ENCODE measurements at regions of chr9 and their contacts with region 1.

Region 1: DNA sequence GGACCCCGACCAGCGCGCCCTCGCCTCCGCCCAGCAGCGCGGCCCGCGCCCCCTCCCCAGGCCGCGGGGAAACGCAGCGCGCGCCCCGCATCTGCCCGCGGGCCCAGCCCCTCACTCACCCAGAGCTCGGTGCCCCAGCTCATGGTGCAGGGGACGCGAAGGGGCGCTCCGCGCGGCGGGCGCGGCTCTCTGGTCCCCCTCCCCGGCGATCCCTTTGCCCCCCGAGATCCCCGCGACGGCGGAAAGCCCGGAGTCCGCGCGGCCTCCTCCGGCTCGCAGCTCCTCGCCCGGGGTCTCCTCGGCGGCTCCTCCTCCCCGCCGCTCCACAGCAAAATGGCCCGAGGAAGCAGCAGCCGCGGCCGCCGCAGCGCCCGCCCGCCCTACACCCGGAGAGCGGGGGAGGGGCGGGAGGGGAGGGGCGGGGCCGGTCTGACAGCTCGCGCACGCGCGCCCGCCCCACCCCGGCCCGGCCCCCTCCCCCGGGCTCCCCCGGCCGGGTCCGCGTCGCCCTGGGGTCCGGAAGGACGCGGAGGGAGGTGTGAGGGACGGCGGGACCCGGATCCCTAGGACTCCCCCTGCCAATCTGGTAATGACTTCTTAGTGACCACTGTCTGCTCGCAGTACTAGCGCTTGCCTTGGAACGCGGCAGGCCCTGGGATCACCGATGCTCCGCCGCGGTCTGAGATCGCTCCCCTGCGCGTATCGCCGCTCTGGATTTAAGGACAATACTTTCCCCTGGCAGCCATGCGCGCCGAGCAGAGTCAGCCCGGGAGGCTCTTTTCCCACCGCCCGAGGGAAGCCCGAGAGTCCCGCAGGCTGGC is at the start of gene FNBP1:
- DNase-seq: peak; percentile 56
- ATAC-seq: peak; percentile 82
- H3K4me3 ChIP-seq: peak within 1 kb of the TSS; percentile 68 to 97 (median 78)
- H3K27ac ChIP-seq: peak within 1 kb of the TSS; percentile 85
- H3K4me1 ChIP-seq: peaks cover 55% of the 10 kb centered on the region
- H3K27me3 ChIP-seq: no peaks in the 10 kb centered on the region
- CTCF ChIP-seq: no peak
- EP300 ChIP-seq: no peak
- POLR2A ChIP-seq: peak in 1 of 2 experiments; percentile 73; a peak in 2 of 4 replicates
- RAD21 ChIP-seq: no peak
- total RNA-seq, gene FNBP1: 19.5 and 22.9 TPM in 2 replicates

Region 2: DNA sequence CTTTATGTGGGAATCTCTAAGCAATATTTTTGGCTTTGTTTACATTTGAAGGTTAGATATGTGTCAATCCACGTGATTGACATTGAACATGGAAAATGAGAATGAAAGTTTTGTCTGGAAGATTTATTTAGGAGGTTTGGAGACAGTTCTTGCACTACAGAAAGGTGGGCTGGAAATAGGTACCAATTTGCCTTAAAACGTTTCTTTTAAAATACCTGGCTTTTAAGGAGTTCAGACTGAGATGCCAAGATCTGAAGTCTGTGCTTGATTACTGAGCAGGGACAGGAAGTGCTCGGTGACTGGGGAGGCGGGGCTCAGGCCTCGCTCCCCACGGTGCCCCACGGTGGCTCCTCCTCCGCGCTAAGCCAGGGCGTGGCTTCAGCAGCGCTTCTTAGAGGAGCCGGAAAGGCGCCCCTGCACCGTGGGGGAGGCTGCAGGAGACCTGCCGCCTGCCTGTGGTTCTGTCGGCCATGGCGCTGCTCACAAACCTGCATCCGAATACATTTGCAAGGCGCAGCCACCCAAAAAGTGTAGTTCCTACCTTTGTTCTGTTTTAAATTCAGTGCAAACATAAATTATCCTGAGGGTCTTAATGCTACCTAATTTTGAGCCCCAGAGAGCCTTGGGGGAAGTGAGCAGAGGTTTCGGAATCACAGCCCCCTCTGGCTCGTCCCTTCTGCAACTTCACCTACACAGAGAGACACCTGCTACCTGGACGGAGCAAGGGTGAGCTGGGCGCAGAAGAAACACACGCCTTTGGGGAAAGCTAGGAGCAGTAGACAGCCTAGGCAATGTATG is 158.6 kb before region 1 on chr9:
- CTCF ChIA-PET with region 1: interaction called, 9 read pairs
- POLR2A ChIA-PET with region 1: interaction called, 15 read pairs
- in situ Hi-C with region 1: loop called (anchors 5 kb)
- intact Hi-C with region 1: loop called (anchors 1 kb)
- DNase-seq: peak; percentile 66
- ATAC-seq: peak; percentile 81
- H3K4me3 ChIP-seq: peak overlapping the region; percentile 58 to 86 (median 74)
- H3K27ac ChIP-seq: peak overlapping the region; percentile 41
- H3K4me1 ChIP-seq: peaks cover 15% of the 10 kb centered on the region
- H3K27me3 ChIP-seq: no peaks in the 10 kb centered on the region; a peak in 1 of 5 replicates
- CTCF ChIP-seq: no peak
- EP300 ChIP-seq: no peak
- POLR2A ChIP-seq: peak; percentile 54 to 75; a peak in 3 of 4 replicates
- RAD21 ChIP-seq: no peak

Region 3: DNA sequence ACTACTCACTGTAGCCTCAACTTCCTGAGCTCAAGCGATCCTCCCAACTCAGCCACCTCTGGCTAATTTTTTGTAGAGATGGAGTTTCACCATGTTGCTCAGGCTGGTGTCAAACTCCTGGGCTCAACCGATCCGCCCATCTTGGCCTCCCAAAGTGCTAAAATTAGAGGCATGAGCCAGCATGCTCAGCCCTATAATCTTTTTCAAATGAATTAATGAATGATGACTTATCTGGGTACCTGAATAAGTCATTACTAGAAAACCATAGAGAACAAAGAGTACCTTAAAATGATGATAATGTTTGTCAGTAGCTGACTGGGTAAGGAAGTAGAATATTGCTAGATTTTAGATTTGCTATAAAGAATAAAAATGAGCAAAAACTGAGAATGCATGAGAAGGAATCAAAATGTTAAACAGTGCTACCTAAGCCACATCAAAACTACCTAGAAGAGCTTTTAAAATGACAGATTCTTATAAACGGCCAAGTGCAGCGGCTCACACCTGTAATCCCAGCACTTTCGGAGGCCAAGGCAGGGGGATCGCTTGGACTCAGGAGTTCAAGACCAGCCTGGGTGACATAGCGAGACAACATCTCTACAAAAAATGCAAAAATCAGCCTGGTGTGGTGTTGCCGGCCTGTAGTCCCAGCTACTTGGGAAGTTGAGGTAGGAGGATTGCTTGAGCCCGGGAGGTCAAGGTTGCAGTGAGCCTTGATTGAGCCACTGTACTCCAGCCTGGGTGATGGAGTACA is 13.6 kb before region 1 on chr9:
- CTCF ChIA-PET with region 1: no interaction called
- POLR2A ChIA-PET with region 1: interaction called, 10 read pairs
- in situ Hi-C with region 1: no loop called
- intact Hi-C with region 1: no loop called
- DNase-seq: no peak
- ATAC-seq: peak; percentile 25; the same call in 2 of the 3 replicates
- H3K4me3 ChIP-seq: peak overlapping the region in 2 of 3 experiments; percentile 42; a peak in 3 of 6 replicates
- H3K27ac ChIP-seq: peak overlapping the region; percentile 91
- H3K4me1 ChIP-seq: peaks cover 79% of the 10 kb centered on the region
- H3K27me3 ChIP-seq: no peaks in the 10 kb centered on the region
- CTCF ChIP-seq: no peak
- EP300 ChIP-seq: no peak
- POLR2A ChIP-seq: no peak
- RAD21 ChIP-seq: no peak

Region 4: DNA sequence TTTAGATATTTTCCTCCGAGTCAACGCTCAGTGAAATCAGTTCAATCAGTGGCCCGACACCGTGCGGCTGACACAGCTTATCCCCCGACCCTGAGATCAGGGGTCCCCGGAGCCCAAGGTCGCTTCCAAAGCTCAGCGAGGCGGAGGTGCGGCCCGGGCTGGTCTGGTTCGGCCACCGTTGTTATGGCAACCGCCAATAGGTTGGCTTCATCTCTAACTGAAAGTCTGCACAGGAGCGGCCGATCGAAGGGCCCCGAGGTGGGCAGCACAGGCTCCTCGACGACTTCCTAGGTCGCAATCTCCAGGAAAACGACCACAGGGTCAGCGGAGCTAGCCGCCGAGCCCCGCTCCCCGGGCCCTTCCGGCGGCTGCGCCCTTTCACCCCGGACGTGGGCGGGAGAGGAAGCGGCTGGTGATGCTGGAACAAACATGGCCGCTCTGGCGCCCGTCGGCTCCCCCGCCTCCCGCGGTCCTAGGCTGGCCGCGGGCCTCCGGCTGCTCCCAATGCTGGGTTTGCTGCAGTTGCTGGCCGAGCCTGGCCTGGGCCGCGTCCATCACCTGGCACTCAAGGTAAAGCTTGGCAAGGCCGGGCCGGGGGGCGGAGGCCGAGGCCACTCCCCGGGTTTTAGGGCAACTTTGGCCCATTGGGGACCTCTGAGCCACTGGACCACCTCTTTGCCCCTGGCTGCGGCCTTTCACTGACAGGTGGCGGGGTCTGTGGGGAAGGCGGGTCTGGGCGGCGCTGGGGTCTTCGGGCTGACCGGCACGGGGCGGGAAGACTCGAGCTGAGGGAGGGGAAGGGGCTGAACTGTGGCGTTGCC is 10.7 kb after region 1 on chr9 and contains the start of gene GPR107:
- CTCF ChIA-PET with region 1: no interaction called
- POLR2A ChIA-PET with region 1: interaction called, 39 read pairs
- in situ Hi-C with region 1: no loop called
- intact Hi-C with region 1: no loop called
- DNase-seq: peak; percentile 61
- ATAC-seq: peak; percentile 97
- H3K4me3 ChIP-seq: peak within 1 kb of the TSS; percentile 90 to 97 (median 93)
- H3K27ac ChIP-seq: peak within 1 kb of the TSS; percentile 87
- H3K4me1 ChIP-seq: peaks cover 30% of the 10 kb centered on the region
- H3K27me3 ChIP-seq: no peaks in the 10 kb centered on the region; a peak in 1 of 5 replicates
- CTCF ChIP-seq: no peak; the same call in 1 of the 2 replicates
- EP300 ChIP-seq: 0 out of 4 replicates have a peak, but pooled peaks of 1 of the 2 experiments have one; percentile 27
- POLR2A ChIP-seq: peak; percentile 79 to 86
- RAD21 ChIP-seq: no peak; the same call in 1 of the 2 replicates
- total RNA-seq, gene GPR107: 18.7 and 22.5 TPM in 2 replicates